ENCODE measurements at regions of chr15 and their contacts with region 1.

Region 1: DNA sequence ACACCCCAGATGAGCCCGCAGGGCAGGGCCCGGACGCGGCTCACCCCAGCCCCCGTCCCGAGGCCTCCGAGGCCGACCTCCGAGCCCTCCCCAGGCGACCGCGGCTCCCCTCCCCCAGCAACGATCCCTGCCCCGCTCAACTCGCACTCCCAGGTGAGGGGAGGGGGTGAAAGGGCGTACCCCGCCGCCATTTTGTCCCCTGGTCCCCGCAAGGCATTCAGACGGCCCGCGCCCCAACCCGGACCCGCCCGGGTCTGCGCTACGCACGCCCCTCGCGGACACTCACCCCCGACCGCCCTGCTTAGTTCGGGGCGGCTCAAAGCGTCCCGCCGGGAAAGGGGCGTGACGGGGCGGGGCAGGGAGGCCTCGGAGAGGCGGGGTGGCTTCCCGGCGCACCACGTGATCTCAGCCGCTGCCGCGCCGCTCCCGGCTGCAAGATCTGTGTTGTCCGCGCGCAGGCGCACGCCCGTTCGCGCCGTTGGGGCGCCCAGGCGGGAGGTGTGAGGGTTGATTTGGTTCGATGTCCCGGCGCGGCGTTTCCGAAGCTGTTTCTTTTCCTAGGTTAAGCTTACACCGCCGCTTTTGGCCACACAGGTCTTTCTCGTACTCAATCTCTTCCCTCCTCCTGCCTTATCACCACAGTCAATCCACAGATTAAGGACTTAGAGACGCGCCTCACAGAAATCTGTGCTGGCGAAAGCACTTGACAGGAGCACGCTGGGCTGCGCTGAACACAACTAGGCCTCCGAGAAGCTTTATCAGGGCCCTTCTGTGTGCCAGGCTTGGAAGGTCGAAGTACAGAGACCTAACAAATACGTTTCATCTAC is at the start of gene SCAPER:
- DNase-seq: peak; percentile 95 to 97
- ATAC-seq: peak; percentile 98
- H3K4me3 ChIP-seq: peak within 1 kb of the TSS; percentile 71 to 91
- H3K27ac ChIP-seq: peak within 1 kb of the TSS; percentile 1 to 55
- H3K4me1 ChIP-seq: peaks cover 0 to 1% of the 10 kb centered on the region in 2 donors
- H3K27me3 ChIP-seq: no peaks in the 10 kb centered on the region
- total RNA-seq, gene SCAPER: 37.8 to 44.3 TPM

Region 2: DNA sequence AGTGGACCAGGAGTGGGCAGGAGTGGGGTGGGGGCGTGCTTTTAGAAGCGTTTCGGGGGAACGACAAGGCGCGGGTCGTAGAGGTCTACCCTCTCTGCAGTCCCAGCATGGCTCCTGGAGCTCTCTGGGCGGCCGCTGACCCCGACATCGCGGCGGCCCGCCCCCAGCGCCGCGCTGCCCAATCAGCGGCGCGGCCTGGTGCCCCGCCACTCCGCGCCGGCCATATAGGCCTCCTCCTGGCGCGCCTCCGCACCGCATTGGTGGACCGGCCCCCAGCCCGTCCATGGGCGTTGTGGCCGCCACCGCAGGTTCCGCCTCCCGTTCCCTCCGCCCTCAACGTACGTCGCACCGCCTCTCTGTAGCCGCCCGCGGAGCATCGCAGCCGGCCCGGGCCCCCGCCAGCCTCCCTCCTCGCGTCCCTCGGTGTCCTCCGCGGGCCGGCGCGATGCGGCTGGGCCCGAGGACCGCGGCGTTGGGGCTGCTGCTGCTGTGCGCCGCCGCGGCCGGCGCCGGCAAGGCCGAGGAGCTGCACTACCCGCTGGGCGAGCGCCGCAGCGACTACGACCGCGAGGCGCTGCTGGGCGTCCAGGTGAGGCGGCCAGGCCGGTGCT is 26.3 kb after region 1 on chr15 and contains the start of gene RCN2:
- intact Hi-C with region 1: loop called in 1 of 2 experiments (anchors 1 kb)
- DNase-seq: peak; percentile 97 to 98
- ATAC-seq: peak; percentile 100
- H3K4me3 ChIP-seq: peak within 1 kb of the TSS; percentile 90 to 95
- H3K27ac ChIP-seq: peak within 1 kb of the TSS in 1 of 2 donors; percentile 88
- H3K4me1 ChIP-seq: no peaks in the 10 kb centered on the region
- H3K27me3 ChIP-seq: no peaks in the 10 kb centered on the region
- total RNA-seq, gene RCN2: 41.0 to 48.9 TPM

Measured in aorta (tissue), 5 donors.